AG04449 (cell line): ENCODE measurements at regions of chr10 and their contacts with region 1.

Region 1: GRCh38 chr10:101141616-101142532 is 10.8 kb downstream of the TLX1 start:
- DNase-seq: peak; percentile 16
- H3K4me3 ChIP-seq: no peak overlapping the region; the same call in 1 of the 2 replicates
- CTCF ChIP-seq: peak; percentile 95

Region 2: GRCh38 chr10:100912605-100913469 is 229.0 kb before region 1 on chr10 and contains the start of gene SLF2:
- CTCF ChIA-PET with region 1: no interaction called
- POLR2A ChIA-PET with region 1: no interaction called
- DNase-seq: peak; percentile 89
- H3K4me3 ChIP-seq: peak within 1 kb of the TSS; percentile 97
- CTCF ChIP-seq: no peak

Region 3: GRCh38 chr10:101018600-101019439 is 123.1 kb before region 1 on chr10:
- CTCF ChIA-PET with region 1: interaction called, 19 read pairs
- POLR2A ChIA-PET with region 1: no interaction called
- DNase-seq: no peak
- H3K4me3 ChIP-seq: no peak overlapping the region
- CTCF ChIP-seq: peak; percentile 98

Region 4: DNA sequence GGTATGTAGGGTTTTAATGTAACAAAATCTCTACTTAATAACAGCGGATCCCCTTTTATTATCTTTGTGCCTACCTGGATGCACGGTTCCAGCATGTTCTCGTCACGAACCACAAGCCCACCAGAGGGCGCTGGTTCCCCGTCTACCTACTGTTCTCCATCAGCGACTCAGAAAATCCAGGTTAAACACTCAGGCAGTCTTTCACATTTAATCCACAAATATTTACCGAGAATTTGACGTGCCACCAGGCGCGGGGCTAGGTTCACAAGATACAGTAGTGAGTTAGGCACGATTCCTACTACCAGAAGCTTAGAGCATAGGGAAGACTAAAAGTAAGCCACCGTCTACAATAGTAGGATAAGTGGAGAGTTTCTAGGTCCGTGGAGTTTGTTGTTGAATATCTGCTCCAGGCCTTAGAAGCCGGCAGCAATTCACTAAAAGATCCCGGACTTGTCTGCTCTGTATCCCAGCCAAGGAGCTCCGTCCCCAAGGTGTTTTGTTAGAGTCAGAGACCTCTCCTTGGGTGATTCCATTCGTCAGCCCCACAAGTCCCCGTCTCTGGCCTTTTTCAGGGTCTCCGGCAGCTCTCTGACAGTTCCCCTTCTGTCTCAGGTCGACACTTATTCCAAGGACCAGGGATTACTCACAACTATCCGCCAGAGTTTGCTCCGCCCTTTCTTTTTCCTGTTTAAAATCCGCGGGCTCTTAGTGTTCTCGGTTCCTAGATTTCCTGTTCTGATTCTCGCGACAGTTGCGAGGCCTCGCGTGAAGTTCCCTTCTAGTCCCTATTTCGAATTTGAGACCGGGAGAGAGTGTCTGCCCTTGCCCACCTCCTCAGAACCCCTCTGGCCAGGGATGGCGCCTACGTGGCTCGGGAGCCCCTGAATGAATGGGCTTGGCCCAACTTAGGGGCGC is 81.6 kb before region 1 on chr10:
- CTCF ChIA-PET with region 1: interaction called, 129 read pairs
- POLR2A ChIA-PET with region 1: interaction called, 5 read pairs
- DNase-seq: peak; percentile 50
- H3K4me3 ChIP-seq: peak overlapping the region; percentile 96
- CTCF ChIP-seq: peak; percentile 88

Region 5: DNA sequence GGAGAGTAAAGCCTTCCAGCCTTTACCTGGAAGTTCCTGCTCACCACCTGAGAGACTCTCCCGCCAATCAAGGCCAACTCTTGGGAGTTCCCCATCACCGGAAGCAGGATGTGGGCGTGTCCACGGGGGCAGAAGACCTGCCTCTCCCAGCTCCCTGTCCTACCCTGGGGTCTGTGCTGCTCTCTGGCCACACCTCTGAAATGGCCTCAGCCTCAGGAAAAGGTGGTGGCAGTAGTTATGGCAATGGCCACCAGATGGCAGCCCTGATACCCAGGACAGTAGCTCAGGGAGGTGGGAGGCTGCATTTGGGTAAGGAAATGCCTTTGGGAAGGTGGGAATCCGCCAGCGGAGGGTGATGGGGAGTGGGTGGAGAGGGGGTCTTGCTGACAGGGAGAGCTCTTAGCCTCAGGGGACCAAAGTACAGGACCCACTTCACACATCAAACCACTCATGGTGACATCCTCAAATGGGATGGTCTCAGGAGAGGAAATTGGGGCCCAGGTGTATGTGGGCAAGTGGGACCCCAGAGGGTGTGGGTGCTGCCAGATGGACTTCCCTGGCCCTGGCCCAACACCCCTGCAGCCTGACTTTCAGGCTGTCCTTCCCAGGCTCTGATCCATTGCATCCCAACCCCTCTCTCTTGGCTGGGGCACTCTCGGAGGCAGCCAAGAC is 46.2 kb before region 1 on chr10:
- CTCF ChIA-PET with region 1: interaction called, 556 read pairs
- POLR2A ChIA-PET with region 1: interaction called, 3 read pairs
- DNase-seq: no peak
- H3K4me3 ChIP-seq: no peak overlapping the region
- CTCF ChIP-seq: peak; percentile 92

Region 6: GRCh38 chr10:101130984-101131961 is 10.6 kb before region 1 on chr10 and contains the start of gene TLX1:
- CTCF ChIA-PET with region 1: interaction called, 50 read pairs
- POLR2A ChIA-PET with region 1: no interaction called
- DNase-seq: no peak
- H3K4me3 ChIP-seq: no peak within 1 kb of the TSS
- CTCF ChIP-seq: no peak